Activated T-helper 1 cell treated with anti-CD3 and anti-CD28 coated beads, Interleukin-12 subunit alpha, Interleukin-12 subunit beta, Interleukin-2, Interleukin-4 antibody, amounts not matched to agents 30 ng/mL and 10 ng/mL and 1 ng/mL, durations not matched to agents 14 hours and 24 hours and 36 hours (primary cell): ENCODE measurements at regions of chr10 and their contacts with region 1.

Region 1: GRCh38 chr10:119165171-119166110 is at the start of gene SFXN4:
- DNase-seq: peak; percentile 82
- H3K4me3 Mint-ChIP-seq: peak within 1 kb of the TSS; percentile 91
- H3K27ac Mint-ChIP-seq: peak within 1 kb of the TSS; percentile 94
- H3K4me1 Mint-ChIP-seq: peaks cover 45% of the 10 kb centered on the region
- H3K27me3 Mint-ChIP-seq: no peaks in the 10 kb centered on the region
- total RNA-seq, gene SFXN4: 58.2 and 58.7 TPM in 2 replicates

Region 2: DNA sequence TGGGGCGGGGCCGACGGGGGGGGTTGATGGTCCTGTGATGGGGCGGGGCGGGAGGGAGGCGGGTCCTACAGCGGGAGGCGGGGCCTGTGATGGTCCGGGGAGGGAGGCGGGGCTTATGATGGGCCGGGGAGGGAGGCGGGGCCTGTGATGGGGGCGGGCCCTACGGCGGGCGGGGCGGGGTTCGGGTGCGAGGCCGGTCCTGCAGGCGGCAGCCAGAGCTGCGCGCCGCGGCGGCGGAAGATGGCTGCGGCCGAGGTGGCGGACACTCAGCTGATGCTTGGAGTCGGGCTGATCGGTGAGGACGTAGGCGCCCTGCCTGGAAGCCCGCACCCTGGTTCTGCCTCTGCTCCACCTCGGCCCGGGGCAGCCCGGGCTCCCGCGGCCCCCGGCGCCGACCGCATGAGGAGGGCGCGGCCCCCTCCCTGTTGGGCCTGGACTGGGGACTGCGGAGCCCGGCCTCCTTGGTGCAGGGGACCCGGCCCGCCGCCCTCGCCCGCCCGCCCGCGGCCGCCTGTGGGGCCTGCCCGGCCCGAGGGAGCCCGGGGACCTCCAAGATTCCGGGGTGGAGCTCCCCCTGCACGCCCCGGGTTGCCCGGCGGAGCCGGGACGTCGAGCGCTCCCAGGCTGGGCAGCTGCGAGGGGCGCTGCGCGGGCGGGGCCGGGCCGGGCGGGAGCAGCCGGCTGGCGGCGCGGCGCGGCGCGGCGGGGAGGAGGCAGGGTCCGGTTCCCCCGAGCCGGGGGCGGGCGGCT is 61.4 kb before region 1 on chr10 and contains the start of gene DENND10:
- intact Hi-C with region 1: loop called (anchors 1 kb)
- DNase-seq: peak; percentile 68
- H3K4me3 Mint-ChIP-seq: peak within 1 kb of the TSS; percentile 87
- H3K27ac Mint-ChIP-seq: peak within 1 kb of the TSS; percentile 58
- H3K4me1 Mint-ChIP-seq: peaks cover 22% of the 10 kb centered on the region
- H3K27me3 Mint-ChIP-seq: no peaks in the 10 kb centered on the region
- total RNA-seq, gene DENND10: 20.1 and 25.4 TPM in 2 replicates

Region 3: DNA sequence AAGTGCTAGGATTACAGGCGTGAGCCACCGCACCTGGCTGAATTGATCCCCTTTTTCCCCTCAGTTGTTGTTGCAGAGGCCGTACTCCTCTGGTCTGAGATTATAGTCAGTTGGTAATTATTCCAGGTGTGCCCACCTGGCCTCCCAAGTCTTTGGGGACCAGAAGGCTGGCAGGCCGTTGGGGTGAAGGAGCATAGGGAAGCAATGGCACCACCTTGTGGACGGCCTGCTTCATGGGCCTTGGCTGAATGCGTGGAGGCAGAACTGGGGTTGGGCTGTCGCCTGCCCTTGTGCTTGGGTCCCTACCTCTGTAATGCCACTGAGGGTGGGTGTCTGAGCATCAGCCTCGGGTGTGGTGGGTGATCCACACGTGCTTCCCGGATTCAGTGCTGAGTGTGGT is 251.4 kb after region 1 on chr10:
- intact Hi-C with region 1: loop called (anchors 1 kb)
- DNase-seq: peak; percentile 51
- H3K4me3 Mint-ChIP-seq: no peak overlapping the region
- H3K27ac Mint-ChIP-seq: no peak overlapping the region
- H3K4me1 Mint-ChIP-seq: no peaks in the 10 kb centered on the region
- H3K27me3 Mint-ChIP-seq: no peaks in the 10 kb centered on the region